H1 (cell line): ENCODE measurements at regions of chr4 and their contacts with region 1.

Region 1: DNA sequence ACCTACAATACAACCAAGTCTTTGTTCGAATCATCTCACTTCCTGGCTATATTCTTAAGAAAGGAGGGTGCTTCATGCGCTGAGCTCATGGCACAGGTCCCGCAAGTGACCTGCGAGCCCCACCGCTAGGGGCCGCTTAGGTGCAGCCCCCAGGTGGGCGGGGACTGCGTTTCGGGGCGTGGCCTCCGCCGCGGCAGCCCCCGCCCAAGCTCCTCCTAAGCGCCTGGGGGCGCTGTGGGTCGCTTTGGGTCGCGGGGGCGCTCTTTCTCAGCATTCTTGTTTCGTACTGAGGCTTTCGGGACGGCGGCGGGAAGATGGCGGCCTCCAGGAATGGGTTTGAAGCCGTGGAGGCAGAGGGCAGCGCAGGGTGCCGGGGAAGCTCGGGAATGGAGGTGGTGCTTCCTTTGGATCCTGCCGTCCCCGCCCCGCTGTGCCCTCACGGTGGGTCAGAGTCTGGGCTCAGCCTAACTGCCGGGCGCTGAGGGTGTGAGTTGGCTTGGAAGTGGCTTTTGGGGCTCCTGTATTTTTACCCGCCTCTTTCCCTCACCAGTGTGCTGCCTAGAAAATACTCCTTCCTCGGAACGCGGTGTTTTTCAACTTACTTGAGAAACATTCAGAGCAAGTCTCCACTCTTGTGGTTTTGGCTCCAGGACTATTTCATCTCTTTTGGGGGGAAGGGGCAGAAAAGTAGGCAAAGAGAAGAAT is at the start of gene ZCCHC4:
- DNase-seq: peak; percentile 84 to 94
- H3K4me3 ChIP-seq: peak within 1 kb of the TSS; percentile 61 to 93 (median 90)
- H3K27ac ChIP-seq: peak within 1 kb of the TSS; percentile 89
- H3K4me1 ChIP-seq: no peaks in the 10 kb centered on the region; a peak in 1 of 7 replicates
- H3K27me3 ChIP-seq: no peaks in the 10 kb centered on the region; a peak in 1 of 7 replicates
- CTCF ChIP-seq: peak; percentile 92 to 99 (median 99)
- EP300 ChIP-seq: no peak; a peak in 1 of 3 replicates
- POLR2A ChIP-seq: peak; percentile 94 to 96
- RAD21 ChIP-seq: peak; percentile 45 to 62; a peak in 3 of 4 replicates
- total RNA-seq, gene ZCCHC4: 10.8 and 12.5 TPM in 2 replicates

Region 2: DNA sequence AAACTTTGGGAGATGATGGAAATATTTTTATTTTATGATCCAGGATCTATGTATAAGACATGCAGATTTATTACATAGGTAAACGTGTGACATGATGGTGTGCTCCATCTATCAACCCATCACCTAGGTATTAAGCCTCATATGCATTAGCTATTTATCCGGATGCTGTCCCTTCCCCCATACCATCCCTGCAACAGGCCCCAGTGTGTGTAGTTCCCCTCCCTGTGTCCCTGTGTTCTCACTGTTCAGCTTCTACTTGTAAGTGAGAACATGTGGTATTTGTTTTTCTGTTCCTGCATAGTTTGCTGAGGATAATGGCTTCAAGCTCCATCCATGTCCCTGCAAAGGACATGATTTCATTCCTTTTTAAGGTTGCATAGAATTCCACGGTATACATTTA is 28.2 kb before region 1 on chr4:
- CTCF ChIA-PET with region 1: interaction called, 15 read pairs
- POLR2A ChIA-PET with region 1: interaction called, 4 read pairs
- DNase-seq: no peak
- H3K4me3 ChIP-seq: no peak overlapping the region
- H3K27ac ChIP-seq: no peak overlapping the region
- H3K4me1 ChIP-seq: no peaks in the 10 kb centered on the region
- H3K27me3 ChIP-seq: no peaks in the 10 kb centered on the region
- CTCF ChIP-seq: no peak
- EP300 ChIP-seq: no peak
- POLR2A ChIP-seq: no peak
- RAD21 ChIP-seq: no peak

Region 3: GRCh38 chr4:25290490-25291067 is 22.1 kb before region 1 on chr4:
- CTCF ChIA-PET with region 1: interaction called, 15 read pairs
- POLR2A ChIA-PET with region 1: interaction called, 4 read pairs
- DNase-seq: no peak
- H3K4me3 ChIP-seq: no peak overlapping the region
- H3K27ac ChIP-seq: no peak overlapping the region
- H3K4me1 ChIP-seq: peaks cover 0 to 3% (median 0%) of the 10 kb centered on the region in 4 experiments; a peak in 2 of 7 replicates
- H3K27me3 ChIP-seq: no peaks in the 10 kb centered on the region
- CTCF ChIP-seq: no peak
- EP300 ChIP-seq: no peak
- POLR2A ChIP-seq: no peak
- RAD21 ChIP-seq: no peak

Region 4: GRCh38 chr4:25299480-25300188 is 13.0 kb before region 1 on chr4:
- CTCF ChIA-PET with region 1: interaction called, 31 read pairs
- POLR2A ChIA-PET with region 1: interaction called, 6 read pairs
- DNase-seq: no peak
- H3K4me3 ChIP-seq: no peak overlapping the region
- H3K27ac ChIP-seq: no peak overlapping the region
- H3K4me1 ChIP-seq: no peaks in the 10 kb centered on the region
- H3K27me3 ChIP-seq: no peaks in the 10 kb centered on the region
- CTCF ChIP-seq: no peak
- EP300 ChIP-seq: no peak
- POLR2A ChIP-seq: no peak
- RAD21 ChIP-seq: peak in 1 of 2 experiments; percentile 39; a peak in 2 of 4 replicates

Region 5: DNA sequence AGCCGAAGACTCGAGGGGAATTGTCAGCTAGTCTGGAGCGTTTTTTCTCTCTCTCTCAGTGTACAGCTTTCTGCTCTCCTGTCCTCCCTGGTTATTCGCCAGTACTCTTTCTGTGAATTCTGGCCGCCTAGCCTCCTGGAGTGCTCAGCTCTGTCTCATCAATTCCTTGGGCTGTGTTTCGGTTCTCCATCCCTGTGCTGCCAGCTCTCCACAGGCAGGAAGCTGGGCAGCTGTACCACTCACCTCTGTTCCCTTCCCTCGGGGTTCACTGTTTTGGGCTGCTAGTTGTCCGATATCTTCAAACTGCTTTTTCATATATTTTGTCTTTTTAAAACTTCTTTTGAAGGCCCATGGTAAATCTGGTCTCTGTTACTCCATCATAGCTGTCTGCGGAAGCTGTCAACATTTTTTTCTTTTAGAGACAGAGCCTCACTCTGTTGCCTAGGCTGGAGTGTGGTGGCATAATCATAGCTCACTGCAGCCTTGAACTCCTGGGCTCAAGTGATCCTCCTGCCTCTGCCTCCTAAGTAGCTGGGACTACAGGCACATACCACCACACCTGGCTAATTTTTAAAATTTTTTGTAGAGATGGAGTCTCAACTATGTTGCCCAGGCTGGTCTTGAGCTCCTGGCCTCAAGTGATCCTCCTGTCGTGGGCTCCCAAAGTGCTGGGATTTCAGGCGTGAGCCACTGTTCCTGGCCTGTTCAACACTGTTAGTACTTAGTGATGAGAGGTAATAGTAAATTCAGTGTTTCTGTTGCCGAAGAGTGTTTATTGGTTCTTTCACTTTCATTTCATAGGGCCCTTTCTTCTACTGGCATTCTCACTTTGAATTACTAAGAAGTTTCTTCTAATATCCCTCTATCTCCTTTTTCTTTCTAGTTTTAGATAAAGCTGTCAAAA is 18.5 kb after region 1 on chr4:
- CTCF ChIA-PET with region 1: interaction called, 20 read pairs
- POLR2A ChIA-PET with region 1: interaction called, 5 read pairs
- DNase-seq: no peak
- H3K4me3 ChIP-seq: no peak overlapping the region
- H3K27ac ChIP-seq: no peak overlapping the region
- H3K4me1 ChIP-seq: no peaks in the 10 kb centered on the region
- H3K27me3 ChIP-seq: no peaks in the 10 kb centered on the region
- CTCF ChIP-seq: no peak
- EP300 ChIP-seq: no peak
- POLR2A ChIP-seq: no peak
- RAD21 ChIP-seq: no peak

Region 6: GRCh38 chr4:25358515-25359275 is 46.0 kb after region 1 on chr4:
- CTCF ChIA-PET with region 1: interaction called, 10 read pairs
- POLR2A ChIA-PET with region 1: interaction called, 3 read pairs
- DNase-seq: no peak
- H3K4me3 ChIP-seq: no peak overlapping the region
- H3K27ac ChIP-seq: no peak overlapping the region
- H3K4me1 ChIP-seq: no peaks in the 10 kb centered on the region
- H3K27me3 ChIP-seq: no peaks in the 10 kb centered on the region
- CTCF ChIP-seq: no peak
- EP300 ChIP-seq: no peak
- POLR2A ChIP-seq: no peak
- RAD21 ChIP-seq: no peak

Region 7: GRCh38 chr4:25367004-25367621 is 54.5 kb after region 1 on chr4:
- CTCF ChIA-PET with region 1: interaction called, 47 read pairs
- POLR2A ChIA-PET with region 1: interaction called, 3 read pairs
- DNase-seq: no peak
- H3K4me3 ChIP-seq: no peak overlapping the region
- H3K27ac ChIP-seq: no peak overlapping the region
- H3K4me1 ChIP-seq: peaks cover 0 to 4% (median 1%) of the 10 kb centered on the region in 4 experiments; a peak in 2 of 7 replicates
- H3K27me3 ChIP-seq: no peaks in the 10 kb centered on the region
- CTCF ChIP-seq: peak in 2 of 3 experiments; percentile 36 to 37; a peak in 2 of 4 replicates
- EP300 ChIP-seq: no peak
- POLR2A ChIP-seq: no peak
- RAD21 ChIP-seq: peak; percentile 55 to 72